ENCODE measurements at regions of chr6 and their contacts with region 1.

Region 1: DNA sequence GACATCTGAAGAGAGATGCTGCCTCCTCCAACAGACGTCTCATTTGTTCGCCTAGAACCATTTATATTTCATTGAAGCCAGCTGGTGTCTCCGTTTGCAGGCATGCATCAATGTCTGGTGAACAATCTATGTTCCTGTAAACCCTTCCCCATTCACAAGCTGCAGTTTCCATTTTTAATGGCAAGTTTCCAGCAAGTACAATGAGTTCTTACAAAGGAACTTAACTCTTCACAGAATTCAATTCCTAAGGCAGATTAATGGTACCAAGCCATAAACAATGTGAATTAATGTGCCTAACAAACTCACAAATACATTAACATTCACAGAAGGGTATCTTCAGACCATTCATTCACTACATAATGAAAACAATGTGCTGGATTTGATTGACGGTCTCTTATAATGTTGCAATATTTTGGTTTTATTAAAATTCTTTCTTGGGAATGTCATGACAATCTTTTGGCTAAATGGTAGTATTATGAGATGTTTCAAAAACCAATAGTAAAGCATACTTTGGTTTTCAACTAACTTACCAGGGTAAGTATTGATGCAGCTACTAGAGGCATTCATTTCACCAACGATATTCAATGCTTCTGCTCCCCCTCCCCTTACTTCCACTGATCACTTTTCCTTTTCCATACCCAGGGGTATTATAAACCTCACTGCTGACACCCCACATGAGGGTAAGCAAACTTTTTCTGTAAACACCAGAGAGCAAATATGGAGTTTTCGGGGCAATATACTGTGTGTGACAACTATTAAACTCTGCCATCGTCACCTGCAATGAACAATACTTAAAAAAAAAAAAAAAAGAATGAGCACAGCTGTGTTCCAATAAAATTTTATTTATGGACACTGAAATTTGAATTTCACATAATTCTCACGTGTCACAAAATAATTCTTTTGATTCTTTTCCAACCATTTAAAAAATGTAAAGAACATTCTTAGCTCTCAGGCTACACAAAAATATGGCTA is 4.2 kb downstream of the AKIRIN2 start:
- DNase-seq: no peak
- H3K27ac ChIP-seq: no peak overlapping the region
- CTCF ChIP-seq: no peak

Region 2: DNA sequence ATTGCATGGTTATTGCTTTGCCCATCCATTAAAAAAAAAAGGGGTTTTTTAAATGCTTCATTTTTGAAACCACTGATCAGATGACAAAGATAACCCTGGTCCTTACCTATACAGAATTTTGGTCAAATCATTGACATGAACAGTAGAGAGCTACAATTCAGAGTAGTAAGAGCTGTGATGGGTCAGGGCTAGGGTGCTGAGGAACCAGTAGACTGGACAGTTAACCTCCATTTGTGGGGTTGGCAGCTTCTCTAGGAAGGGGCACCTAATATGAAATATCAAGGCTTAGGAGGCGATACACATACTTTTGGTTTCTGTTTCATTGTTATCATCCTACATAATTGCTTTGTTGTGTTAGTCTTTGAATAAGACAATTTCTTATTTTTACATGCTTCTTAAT is 52.8 kb before region 1 on chr6:
- CTCF ChIA-PET with region 1: no interaction called
- POLR2A ChIA-PET with region 1: interaction called, 11 read pairs
- DNase-seq: no peak
- H3K27ac ChIP-seq: no peak overlapping the region
- CTCF ChIP-seq: no peak

Region 3: DNA sequence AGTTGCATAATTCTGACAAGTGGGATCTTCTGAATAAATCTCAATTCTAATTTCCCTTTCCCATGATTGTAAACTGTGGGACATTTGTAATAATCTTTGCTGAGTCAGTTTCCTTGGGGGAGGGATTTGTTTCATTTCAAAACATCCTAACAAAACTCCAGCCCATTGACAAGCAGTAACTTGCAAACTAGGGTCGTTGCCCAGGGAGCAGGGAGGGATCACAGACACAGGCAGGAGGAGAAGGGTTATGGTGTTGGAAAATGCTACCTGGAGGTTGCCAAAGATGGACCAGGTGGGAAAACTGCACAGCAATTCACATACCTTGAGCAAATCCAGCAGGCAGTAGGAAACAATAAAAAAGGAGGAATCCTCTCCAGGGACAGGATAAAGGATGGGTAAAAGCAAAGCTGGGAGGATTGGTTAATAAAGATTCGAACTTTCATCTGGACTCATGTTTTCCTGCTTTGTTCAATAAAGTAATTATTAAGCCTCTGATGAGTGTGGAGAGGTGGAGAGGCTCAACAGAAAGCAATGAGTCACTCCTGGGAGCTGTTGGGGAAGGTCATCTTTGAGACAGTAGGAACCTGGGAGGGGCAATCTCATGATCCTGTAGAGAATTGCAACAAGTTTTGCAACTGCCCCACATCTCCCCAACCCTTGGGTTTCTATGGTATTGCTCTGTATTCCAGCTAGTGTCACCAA is 91.5 kb after region 1 on chr6:
- CTCF ChIA-PET with region 1: no interaction called
- POLR2A ChIA-PET with region 1: no interaction called
- DNase-seq: peak; percentile 78
- H3K27ac ChIP-seq: peak overlapping the region; percentile 64
- CTCF ChIP-seq: no peak

Region 4: GRCh38 chr6:88145298-88145963 is 447.6 kb after region 1 on chr6:
- CTCF ChIA-PET with region 1: no interaction called
- POLR2A ChIA-PET with region 1: no interaction called
- DNase-seq: no peak
- H3K27ac ChIP-seq: no peak overlapping the region
- CTCF ChIP-seq: no peak

Measured in RWPE1 (cell line).